Colonic mucosa (tissue), 4 donors: ENCODE measurements at regions of chr2 and their contacts with region 1.

Region 1: DNA sequence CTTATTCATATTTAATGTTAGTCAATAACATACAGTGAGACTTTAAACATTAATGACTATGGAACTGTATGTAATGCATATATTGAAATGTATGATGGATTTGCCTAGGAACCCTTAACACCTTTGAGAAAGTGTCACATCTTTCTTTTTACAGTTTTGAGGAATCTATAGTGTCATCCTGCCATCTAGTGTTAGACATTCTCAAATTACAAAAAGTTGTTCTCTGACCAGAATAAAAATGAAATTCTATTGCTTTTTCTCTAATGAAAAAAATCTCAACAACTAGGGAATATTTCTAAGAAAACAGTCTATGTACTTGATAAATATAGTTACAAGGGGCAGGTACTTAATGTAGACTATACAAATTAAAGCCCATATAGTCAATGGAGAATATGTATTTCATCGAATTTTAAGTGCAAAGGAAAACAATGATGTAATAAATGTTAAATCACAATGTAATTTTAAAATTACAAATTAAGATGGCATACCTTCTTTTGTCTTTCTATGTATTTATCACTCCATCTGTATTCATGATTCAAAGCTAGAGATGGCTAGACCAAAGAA is 5.1 kb upstream of the CALCRL start:
- DNase-seq: no peak
- H3K4me3 ChIP-seq: no peak overlapping the region
- H3K27ac ChIP-seq: no peak overlapping the region
- H3K4me1 ChIP-seq: no peaks in the 10 kb centered on the region
- H3K27me3 ChIP-seq: no peaks in the 10 kb centered on the region
- CTCF ChIP-seq: peak; percentile 17

Region 2: GRCh38 chr2:186862869-186863709 is 590.1 kb before region 1 on chr2:
- intact Hi-C with region 1: loop called (anchors 5 kb)
- DNase-seq: no peak
- H3K4me3 ChIP-seq: no peak overlapping the region
- H3K27ac ChIP-seq: no peak overlapping the region
- H3K4me1 ChIP-seq: no peaks in the 10 kb centered on the region
- H3K27me3 ChIP-seq: no peaks in the 10 kb centered on the region
- CTCF ChIP-seq: peak; percentile 32

Region 3: GRCh38 chr2:187129868-187130267 is 323.3 kb before region 1 on chr2:
- intact Hi-C with region 1: loop called (anchors 5 kb)
- DNase-seq: no peak
- H3K4me3 ChIP-seq: no peak overlapping the region
- H3K27ac ChIP-seq: no peak overlapping the region
- H3K4me1 ChIP-seq: no peaks in the 10 kb centered on the region
- H3K27me3 ChIP-seq: no peaks in the 10 kb centered on the region
- CTCF ChIP-seq: no peak

Region 4: GRCh38 chr2:187509667-187510417 is 56.7 kb after region 1 on chr2:
- intact Hi-C with region 1: no loop called
- DNase-seq: no peak
- H3K4me3 ChIP-seq: no peak overlapping the region
- H3K27ac ChIP-seq: no peak overlapping the region
- H3K4me1 ChIP-seq: no peaks in the 10 kb centered on the region
- H3K27me3 ChIP-seq: no peaks in the 10 kb centered on the region
- CTCF ChIP-seq: no peak

Region 5: GRCh38 chr2:187567126-187567525 is 114.0 kb after region 1 on chr2:
- intact Hi-C with region 1: no loop called
- DNase-seq: no peak
- H3K4me3 ChIP-seq: no peak overlapping the region
- H3K27ac ChIP-seq: no peak overlapping the region
- H3K4me1 ChIP-seq: no peaks in the 10 kb centered on the region
- H3K27me3 ChIP-seq: no peaks in the 10 kb centered on the region
- CTCF ChIP-seq: no peak